ENCODE measurements at regions of chrX and their contacts with region 1.

Region 1: GRCh38 chrX:1323315-1323714 is 13.3 kb upstream of the IL3RA start:
- DNase-seq: peak; percentile 83
- H3K4me3 Mint-ChIP-seq: no peak overlapping the region
- H3K27ac Mint-ChIP-seq: no peak overlapping the region
- H3K4me1 Mint-ChIP-seq: peaks cover 11% of the 10 kb centered on the region
- H3K27me3 Mint-ChIP-seq: peaks cover 8% of the 10 kb centered on the region

Region 2: DNA sequence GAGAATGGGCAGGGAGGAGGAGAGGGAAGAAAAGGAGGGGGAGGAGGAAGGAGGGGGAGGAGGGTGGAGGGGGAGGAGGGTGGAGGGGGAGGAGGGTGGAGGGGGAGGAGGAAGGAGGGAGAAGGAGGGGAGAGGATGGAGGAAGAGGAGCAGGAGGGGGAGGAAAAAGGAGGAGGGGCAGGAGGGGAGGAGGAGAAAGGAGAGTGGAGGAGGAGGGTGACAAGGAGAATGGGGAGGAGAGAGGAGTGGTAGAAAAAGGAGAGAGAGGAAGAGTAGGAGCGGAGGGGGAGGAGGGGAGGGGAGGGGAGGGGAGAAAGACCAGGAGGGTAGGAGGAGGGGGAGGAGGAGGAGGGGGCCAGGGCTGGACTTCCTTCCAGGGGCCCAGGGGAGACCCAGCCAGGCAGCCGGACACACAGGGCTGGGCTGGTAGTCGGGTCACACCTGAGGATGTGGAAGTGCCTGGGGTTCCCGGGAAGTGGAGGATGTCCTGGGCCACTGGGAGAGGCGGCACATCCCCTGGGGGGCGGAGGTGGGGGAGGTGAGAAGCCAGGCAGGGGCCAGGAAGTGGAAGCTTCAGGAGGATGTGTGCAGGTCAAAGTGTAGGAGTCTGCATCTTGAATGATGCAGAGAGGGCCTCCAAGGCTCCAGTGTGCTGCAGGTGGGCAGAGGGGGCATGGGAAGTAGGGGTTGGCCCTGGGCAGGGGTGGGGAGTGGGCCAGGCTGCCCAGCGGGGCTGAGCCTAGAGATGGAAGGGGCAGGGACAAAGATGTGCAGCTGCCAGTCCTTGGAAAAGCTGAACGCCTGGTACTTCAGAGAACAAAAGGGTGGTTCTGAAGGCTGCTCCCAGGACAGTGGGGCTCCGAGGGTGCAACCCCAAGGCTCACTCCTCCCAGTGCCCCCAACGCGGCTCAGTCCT is 32.1 kb after region 1 on chrX:
- CTCF ChIA-PET with region 1: no interaction called
- intact Hi-C with region 1: no loop called
- DNase-seq: no peak
- H3K4me3 Mint-ChIP-seq: no peak overlapping the region
- H3K27ac Mint-ChIP-seq: no peak overlapping the region
- H3K4me1 Mint-ChIP-seq: peaks cover 6% of the 10 kb centered on the region
- H3K27me3 Mint-ChIP-seq: no peaks in the 10 kb centered on the region

Region 3: GRCh38 chrX:1580735-1581531 is 257.6 kb after region 1 on chrX:
- CTCF ChIA-PET with region 1: no interaction called
- intact Hi-C with region 1: loop called (anchors 1 kb)
- DNase-seq: peak; percentile 92
- H3K4me3 Mint-ChIP-seq: no peak overlapping the region
- H3K27ac Mint-ChIP-seq: no peak overlapping the region
- H3K4me1 Mint-ChIP-seq: peaks cover 18% of the 10 kb centered on the region
- H3K27me3 Mint-ChIP-seq: no peaks in the 10 kb centered on the region

Region 4: DNA sequence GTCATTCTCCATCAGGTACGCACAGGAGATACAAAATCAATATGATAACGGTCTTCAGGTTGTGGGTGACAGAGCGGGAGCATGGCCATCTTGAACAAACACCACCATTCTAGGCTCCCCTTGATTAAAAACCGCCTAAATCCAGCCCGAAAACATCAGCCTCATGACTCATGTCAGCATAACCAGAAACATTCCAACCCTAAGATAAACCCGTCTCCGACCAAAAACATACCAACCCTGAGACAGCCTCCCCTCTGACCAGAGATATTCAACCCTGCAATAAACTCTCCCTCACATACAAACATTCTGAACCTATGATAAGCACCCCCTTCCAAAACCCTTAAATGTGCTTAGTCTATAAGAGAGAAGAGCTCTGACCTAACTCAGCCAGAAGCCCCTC is 1019.6 kb after region 1 on chrX:
- CTCF ChIA-PET with region 1: no interaction called
- intact Hi-C with region 1: no loop called
- DNase-seq: no peak
- H3K4me3 Mint-ChIP-seq: no peak overlapping the region
- H3K27ac Mint-ChIP-seq: no peak overlapping the region
- H3K4me1 Mint-ChIP-seq: no peaks in the 10 kb centered on the region
- H3K27me3 Mint-ChIP-seq: no peaks in the 10 kb centered on the region